HAP-1 (cell line): ENCODE measurements at regions of chr17 and their contacts with region 1.

Region 1: GRCh38 chr17:45640141-45640850 is 143.8 kb upstream of the CRHR1 start:
- DNase-seq: peak; percentile 63 to 90
- H3K4me3 ChIP-seq: no peak overlapping the region
- H3K4me1 ChIP-seq: no peaks in the 10 kb centered on the region
- H3K27me3 ChIP-seq: peaks cover 3% of the 10 kb centered on the region; the same call in 1 of the 2 replicates

Region 2: DNA sequence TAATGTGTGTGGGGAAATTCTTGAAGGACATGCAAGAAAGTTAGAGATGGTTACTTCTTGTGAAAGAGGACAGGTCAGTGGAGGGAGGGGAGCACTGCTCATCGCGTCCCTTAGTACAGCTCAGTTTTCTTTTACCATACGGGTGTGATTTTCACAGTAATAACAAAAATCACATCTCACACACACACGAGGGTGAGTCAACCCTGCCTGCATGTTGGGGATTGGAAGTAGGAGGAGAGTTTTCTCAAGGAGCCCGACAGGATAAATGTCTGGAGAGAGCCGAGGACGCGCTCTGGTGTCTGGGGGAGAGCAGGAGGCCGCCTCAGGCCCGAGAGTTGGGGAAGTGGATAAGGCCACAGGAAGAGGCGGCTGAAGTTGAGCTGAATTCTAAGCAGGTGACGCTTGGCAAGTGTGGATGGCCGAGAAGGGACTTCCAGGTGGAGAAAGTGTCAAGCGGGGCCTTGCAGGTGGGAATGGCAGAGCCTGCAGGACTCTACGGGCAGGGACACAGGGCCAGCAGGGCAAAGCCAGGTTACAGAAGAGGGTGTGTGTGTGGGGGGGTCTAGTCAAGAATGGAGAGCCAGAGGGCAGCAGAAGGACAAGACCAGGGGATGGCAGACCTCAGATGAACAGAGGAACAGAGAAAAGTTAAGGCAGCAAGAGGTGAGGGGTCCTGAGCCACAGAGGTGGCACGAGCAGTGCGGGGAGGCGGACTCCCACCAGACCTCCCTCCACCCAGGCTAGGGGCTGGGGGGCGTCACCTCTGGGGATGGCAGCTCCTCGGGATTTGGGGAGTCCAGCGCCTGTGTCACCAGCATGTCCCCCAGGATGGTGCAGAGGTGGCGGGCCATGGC is 524.2 kb before region 1 on chr17:
- in situ Hi-C with region 1: no loop called
- DNase-seq: no peak
- H3K4me3 ChIP-seq: no peak overlapping the region
- H3K4me1 ChIP-seq: no peaks in the 10 kb centered on the region
- H3K27me3 ChIP-seq: no peaks in the 10 kb centered on the region

Region 3: GRCh38 chr17:45428050-45428617 is 212.2 kb before region 1 on chr17:
- in situ Hi-C with region 1: loop called (anchors 25 kb)
- DNase-seq: peak; percentile 59 to 85
- H3K4me3 ChIP-seq: no peak overlapping the region
- H3K4me1 ChIP-seq: peaks cover 10% of the 10 kb centered on the region
- H3K27me3 ChIP-seq: no peaks in the 10 kb centered on the region

Region 4: GRCh38 chr17:45834471-45835396 is 194.4 kb after region 1 on chr17:
- in situ Hi-C with region 1: loop called (anchors 5 kb)
- DNase-seq: no peak
- H3K4me3 ChIP-seq: no peak overlapping the region
- H3K4me1 ChIP-seq: no peaks in the 10 kb centered on the region
- H3K27me3 ChIP-seq: peaks cover 3% of the 10 kb centered on the region

Region 5: GRCh38 chr17:45923511-45924268 is 283.4 kb after region 1 on chr17:
- in situ Hi-C with region 1: no loop called
- DNase-seq: no peak
- H3K4me3 ChIP-seq: no peak overlapping the region
- H3K4me1 ChIP-seq: no peaks in the 10 kb centered on the region
- H3K27me3 ChIP-seq: no peaks in the 10 kb centered on the region